Activated B cell treated with CpG ODN at 0.5 μM for 24 hours (primary cell): ENCODE measurements at regions of chr3 and their contacts with region 1.

Region 1: DNA sequence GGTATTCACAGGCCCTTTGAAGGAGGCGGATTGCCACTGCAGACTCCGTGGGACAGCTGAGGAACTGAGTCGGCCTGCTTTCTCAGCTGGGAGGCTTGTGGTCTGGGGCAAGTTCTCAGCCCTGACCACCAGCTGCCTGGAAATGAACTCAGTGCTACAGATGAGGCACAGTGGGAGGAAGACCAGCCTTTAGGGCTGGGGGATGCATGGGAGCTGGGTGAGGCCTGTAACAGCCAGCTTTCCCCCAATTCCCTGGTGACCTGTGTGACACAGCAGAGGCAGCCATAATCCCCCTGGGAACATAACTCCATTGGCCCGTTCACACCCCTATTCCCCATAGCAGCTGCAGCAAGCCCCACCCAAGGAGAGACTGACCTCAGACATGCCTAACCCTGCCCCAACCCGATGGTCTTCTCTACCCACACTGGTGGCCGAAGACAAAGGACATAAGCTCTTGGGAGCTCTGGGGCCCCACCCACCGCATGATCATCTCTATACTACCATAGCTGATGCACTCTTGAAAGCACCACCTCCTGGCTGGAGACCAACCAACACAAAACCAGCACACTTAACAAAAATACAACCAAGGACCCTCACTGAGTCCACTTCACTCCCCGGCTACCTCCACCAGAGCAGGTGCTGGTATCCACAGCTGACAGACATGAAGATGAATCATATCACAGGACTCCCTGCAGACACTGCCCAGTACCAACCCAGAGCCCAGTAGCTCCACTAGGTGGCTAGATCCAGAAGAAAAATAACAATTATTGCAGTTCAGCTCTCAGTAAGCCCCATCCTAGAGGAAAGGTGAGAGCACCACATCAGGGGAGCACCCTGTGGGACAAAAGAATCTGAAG is 24.9 kb downstream of the ZMAT3 start:
- DNase-seq: peak; percentile 54
- ATAC-seq: peak; percentile 88
- H3K4me3 Mint-ChIP-seq: peak overlapping the region; percentile 75
- H3K27ac Mint-ChIP-seq: peak overlapping the region; percentile 87
- H3K4me1 Mint-ChIP-seq: peaks cover 63% of the 10 kb centered on the region
- H3K27me3 Mint-ChIP-seq: no peaks in the 10 kb centered on the region
- CTCF ChIP-seq: no peak

Region 2: GRCh38 chr3:177567833-177568232 is 1478.9 kb before region 1 on chr3:
- CTCF ChIA-PET with region 1: no interaction called
- POLR2A ChIA-PET with region 1: no interaction called
- intact Hi-C with region 1: no loop called
- DNase-seq: no peak
- ATAC-seq: no peak
- H3K4me3 Mint-ChIP-seq: no peak overlapping the region
- H3K27ac Mint-ChIP-seq: no peak overlapping the region
- H3K4me1 Mint-ChIP-seq: peaks cover 17% of the 10 kb centered on the region
- H3K27me3 Mint-ChIP-seq: no peaks in the 10 kb centered on the region
- CTCF ChIP-seq: no peak

Region 3: DNA sequence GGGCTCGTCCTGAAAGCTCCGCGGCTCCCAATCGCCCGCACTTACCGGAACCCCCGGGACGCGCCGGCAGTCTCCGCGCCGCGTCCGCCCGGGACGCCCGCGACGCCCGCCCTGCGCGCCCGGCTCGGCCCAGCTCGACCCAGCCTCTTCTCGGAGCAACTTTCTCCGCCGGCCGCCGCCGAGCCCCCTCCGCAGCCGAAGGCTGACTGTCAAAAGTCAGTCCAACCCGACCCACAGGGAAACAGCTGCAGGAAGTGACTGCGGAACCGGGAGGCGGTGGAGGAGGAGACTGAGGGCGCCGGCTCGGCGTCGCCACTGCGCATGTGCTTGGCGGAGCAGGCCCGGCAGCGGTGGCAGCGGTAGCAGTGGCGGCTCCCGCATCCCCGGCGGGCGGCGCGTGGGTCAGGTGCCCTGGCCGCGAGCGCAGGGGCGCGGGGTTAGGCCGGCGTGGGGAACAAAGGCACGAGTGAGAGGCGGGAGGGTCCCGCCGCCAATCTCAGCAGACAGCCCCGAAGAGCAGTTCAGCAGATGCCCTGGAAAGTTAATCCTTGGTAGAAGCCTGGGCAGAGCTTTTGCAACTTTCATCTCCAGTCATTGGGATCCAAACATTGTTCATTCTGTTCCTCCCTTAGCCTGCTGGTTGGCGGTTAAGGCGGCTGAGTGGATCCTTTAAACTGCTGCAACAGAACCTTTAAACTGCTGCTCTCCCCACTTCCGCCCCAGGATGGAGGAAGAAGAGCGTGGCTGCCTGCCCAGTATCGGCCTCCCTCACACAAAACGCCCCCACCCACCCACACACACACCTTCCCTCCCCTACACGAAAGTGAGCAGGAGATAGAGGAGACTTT is 25.0 kb after region 1 on chr3 and contains the start of gene ZMAT3:
- CTCF ChIA-PET with region 1: interaction called, 11 read pairs
- POLR2A ChIA-PET with region 1: interaction called, 27 read pairs
- intact Hi-C with region 1: loop called (anchors 1 kb)
- DNase-seq: peak; percentile 82
- ATAC-seq: peak; percentile 74
- H3K4me3 Mint-ChIP-seq: peak within 1 kb of the TSS; percentile 96
- H3K27ac Mint-ChIP-seq: peak within 1 kb of the TSS; percentile 91
- H3K4me1 Mint-ChIP-seq: peaks cover 60% of the 10 kb centered on the region
- H3K27me3 Mint-ChIP-seq: no peaks in the 10 kb centered on the region
- CTCF ChIP-seq: no peak
- total RNA-seq, gene ZMAT3: 29.8 and 32.0 TPM in 2 replicates

Region 4: DNA sequence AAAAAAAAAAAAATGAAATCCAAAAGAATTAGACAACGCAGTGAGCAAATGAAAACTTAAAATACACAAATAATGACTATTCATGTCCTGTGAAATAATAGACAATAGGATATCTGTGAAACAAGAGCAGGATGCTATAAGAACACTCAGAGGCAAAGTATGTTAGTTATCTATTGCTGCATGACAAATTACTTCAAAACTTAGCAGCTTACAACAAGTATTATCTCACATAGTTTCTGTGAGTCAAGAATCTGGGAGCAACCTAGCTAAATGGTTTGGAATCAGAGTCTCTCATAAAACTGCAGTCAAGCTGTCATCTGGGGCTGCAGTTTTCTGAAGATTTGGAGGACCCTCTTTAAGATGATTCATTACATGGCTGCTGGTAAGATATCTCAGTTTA is 61.4 kb after region 1 on chr3:
- CTCF ChIA-PET with region 1: interaction called, 6 read pairs
- POLR2A ChIA-PET with region 1: interaction called, 13 read pairs
- intact Hi-C with region 1: no loop called
- DNase-seq: no peak
- ATAC-seq: no peak
- H3K4me3 Mint-ChIP-seq: no peak overlapping the region
- H3K27ac Mint-ChIP-seq: no peak overlapping the region
- H3K4me1 Mint-ChIP-seq: no peaks in the 10 kb centered on the region
- H3K27me3 Mint-ChIP-seq: peaks cover 13% of the 10 kb centered on the region
- CTCF ChIP-seq: no peak

Region 5: DNA sequence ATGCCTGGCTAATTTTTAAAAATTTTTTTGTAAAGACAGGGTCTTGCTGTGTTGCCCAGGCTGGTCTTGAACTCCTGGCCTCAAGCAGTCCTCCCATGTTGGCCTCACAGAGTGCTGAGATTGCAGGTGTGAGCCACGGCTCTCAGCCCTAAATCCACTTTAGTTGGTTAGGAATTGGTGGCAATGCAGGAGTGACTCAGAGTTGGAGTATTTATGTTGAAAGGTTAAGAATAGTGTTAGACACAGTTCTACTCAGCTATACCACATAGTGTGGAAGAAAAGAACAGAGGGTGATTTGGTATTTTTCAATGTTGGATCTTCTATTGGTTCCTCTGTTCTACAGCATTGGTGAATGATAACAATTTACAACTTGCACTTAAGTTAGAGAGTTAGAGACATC is 283.7 kb after region 1 on chr3:
- CTCF ChIA-PET with region 1: no interaction called
- POLR2A ChIA-PET with region 1: interaction called, 12 read pairs
- intact Hi-C with region 1: no loop called
- DNase-seq: no peak
- ATAC-seq: no peak
- H3K4me3 Mint-ChIP-seq: no peak overlapping the region
- H3K27ac Mint-ChIP-seq: no peak overlapping the region
- H3K4me1 Mint-ChIP-seq: peaks cover 4% of the 10 kb centered on the region
- H3K27me3 Mint-ChIP-seq: no peaks in the 10 kb centered on the region
- CTCF ChIP-seq: no peak